ENCODE measurements at regions of chr16 and their contacts with region 1.

Region 1: GRCh38 chr16:10828851-10829731 is 10.5 kb upstream of the TVP23A start:
- DNase-seq: peak; percentile 97
- ATAC-seq: peak; percentile 85

Region 2: GRCh38 chr16:10743610-10744393 is 85.3 kb before region 1 on chr16 and contains the start of gene NUBP1:
- intact Hi-C with region 1: loop called (anchors 5 kb)
- DNase-seq: peak; percentile 99
- ATAC-seq: peak; percentile 95
- total RNA-seq, gene NUBP1: 41.4 TPM

Region 3: DNA sequence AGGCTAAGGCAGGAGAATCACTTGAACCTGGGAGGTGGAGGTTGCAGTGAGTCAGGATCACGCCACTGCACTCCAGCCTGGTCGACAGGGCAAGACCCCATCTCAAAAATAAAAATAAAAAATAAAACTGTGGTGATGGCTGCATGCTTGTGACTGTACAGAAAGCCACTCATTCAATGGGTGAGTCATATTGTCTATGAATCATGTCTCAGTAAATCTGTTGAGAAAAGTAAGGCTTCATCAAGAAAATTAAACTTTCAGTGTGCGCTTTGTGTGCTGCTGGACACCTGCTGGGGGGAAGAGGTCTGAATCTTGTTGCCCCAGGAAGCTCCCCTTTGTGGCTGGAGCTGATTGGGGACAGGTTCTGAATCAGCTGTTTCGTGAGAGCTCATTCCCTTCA is 74.2 kb before region 1 on chr16:
- intact Hi-C with region 1: loop called (anchors 5 kb)
- DNase-seq: no peak
- ATAC-seq: no peak

Region 4: DNA sequence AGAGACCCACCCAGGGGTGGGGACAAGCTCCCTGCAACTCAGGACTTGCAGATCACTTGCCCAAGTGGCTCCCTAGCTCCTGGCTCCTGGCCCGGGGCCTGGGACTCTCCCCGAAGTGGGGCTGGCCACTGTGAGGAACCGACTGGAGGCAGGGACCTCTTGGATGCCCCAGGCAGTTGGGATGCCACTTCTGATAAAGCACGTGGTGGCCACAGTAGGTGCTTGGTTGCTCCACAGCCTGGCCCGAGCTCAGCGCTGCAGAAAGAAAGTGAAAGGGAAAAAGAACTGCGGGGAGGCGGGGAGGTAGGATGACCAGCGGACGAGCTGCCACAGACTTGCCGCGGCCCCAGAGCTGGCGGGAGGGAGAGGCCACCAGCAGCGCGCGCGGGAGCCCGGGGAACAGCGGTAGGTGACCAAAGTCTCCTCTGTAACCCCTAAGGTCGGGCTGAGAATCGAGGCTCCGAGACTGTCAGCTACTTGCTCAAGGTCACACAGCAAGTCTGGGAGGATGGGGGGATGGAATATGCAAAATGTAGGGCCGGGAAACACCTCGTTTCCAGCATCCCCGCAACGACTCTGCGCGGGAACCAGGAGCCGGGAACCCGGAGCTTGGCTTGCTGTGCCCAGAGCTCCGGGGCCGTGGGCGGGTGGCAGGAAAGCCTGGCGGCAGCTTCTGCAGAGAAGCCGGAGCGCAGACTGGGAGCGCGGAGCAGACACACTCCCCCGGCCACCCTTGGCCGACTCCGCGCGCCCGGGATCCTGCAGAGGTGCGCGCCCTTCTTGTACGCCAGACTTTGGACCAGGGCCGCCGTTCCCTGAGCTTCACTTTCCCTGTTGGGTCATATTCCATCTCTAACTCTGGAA is 49.8 kb after region 1 on chr16:
- intact Hi-C with region 1: loop called (anchors 2 kb)
- DNase-seq: peak; percentile 73
- ATAC-seq: peak; percentile 83

Region 5: GRCh38 chr16:10918294-10919002 is 89.4 kb after region 1 on chr16:
- intact Hi-C with region 1: loop called (anchors 5 kb)
- DNase-seq: peak; percentile 94
- ATAC-seq: peak; percentile 79

Region 6: GRCh38 chr16:11964761-11965551 is 1135.9 kb after region 1 on chr16 and contains the start of gene TNFRSF17:
- intact Hi-C with region 1: no loop called
- DNase-seq: no peak
- ATAC-seq: no peak
- total RNA-seq, gene TNFRSF17: not detected